Activated B cell treated with CpG ODN at 0.5 μM for 24 hours (primary cell): ENCODE measurements at regions of chr7 and their contacts with region 1.

Region 1: DNA sequence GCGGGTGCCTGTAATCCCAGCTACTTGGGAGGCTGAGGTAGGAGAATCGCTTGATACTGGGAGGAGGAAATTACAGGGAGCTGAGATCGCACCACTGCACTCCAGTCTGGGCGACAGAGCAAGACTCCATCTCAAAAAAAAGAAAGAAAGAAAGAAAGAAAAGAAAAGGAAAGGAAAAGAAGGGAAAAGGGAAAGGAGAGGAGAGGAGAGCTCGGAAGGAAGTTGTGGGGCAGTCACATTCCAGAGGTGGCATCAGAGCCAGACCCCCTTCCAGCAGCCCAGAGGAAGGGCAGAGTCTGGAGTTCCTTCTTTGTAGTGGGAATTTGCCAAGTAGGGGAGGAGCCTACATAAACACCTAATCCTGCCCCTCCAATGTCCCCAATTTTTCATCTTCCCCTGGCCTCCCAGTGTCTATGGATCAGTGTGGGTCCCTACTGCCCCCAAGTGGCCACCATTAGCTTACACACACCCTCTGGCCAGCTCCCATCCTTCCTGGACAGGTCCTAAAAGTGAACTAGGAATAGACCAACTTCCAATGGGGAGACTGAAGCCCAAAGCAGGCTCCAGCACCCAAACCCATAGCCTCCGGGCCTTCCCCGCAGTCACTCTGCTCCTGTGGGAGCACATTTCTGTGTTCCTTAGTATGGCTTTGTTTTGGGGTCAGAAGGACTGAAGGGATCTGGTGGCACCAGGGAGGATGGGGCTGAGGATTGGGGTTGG is 39.6 kb upstream of the HSPB1 start:
- DNase-seq: no peak
- ATAC-seq: no peak
- H3K4me3 Mint-ChIP-seq: no peak overlapping the region
- H3K27ac Mint-ChIP-seq: no peak overlapping the region
- H3K4me1 Mint-ChIP-seq: peaks cover 12% of the 10 kb centered on the region
- H3K27me3 Mint-ChIP-seq: peaks cover 37% of the 10 kb centered on the region
- CTCF ChIP-seq: no peak

Region 2: DNA sequence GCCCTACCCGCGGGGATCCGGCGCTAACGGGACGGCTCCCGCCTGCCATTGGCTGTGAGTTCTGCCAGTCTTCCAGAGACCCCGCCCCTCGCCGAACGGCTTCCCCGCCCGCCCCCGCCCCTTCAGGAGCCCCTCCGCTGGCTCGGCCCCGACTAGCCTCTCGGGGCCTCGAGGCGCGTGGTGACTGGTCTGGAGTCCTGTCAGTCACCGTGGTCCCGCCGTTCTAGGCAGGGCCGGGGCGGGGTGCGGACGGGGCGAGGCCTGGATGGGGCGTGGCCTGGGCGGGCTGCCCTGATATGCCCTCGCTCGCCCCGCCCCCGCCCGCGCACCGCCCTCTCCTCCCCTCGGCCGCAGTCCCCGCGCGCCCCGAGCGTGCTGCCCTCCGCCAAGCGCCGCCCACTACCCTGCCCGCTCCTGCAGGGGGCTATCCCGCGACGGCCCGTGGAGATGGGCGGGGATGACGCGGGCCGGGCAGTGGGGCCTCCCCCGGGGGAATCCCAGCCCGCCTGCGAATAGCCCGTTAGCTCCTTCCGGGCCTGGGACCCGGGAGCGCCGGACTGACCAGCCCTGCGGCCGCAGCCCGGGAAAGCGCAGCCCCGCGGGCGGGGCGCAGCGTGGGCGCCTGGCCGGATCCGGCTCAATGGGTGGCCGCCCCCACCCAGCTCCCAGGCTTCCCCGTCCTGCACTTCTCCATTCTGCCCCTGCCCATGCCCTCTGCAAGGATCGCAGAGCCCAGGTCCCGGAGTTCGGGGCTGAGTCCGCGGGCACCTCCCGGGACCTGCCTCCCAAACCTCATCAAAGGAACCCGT is 523.7 kb before region 1 on chr7:
- CTCF ChIA-PET with region 1: no interaction called
- POLR2A ChIA-PET with region 1: no interaction called
- intact Hi-C with region 1: no loop called
- DNase-seq: peak; percentile 97
- ATAC-seq: peak; percentile 91
- H3K4me3 Mint-ChIP-seq: peak overlapping the region; percentile 96
- H3K27ac Mint-ChIP-seq: peak overlapping the region; percentile 97
- H3K4me1 Mint-ChIP-seq: peaks cover 38% of the 10 kb centered on the region
- H3K27me3 Mint-ChIP-seq: no peaks in the 10 kb centered on the region
- CTCF ChIP-seq: no peak

Region 3: GRCh38 chr7:76069238-76069638 is 193.6 kb before region 1 on chr7:
- CTCF ChIA-PET with region 1: no interaction called
- POLR2A ChIA-PET with region 1: no interaction called
- intact Hi-C with region 1: no loop called
- DNase-seq: no peak
- ATAC-seq: no peak
- H3K4me3 Mint-ChIP-seq: no peak overlapping the region
- H3K27ac Mint-ChIP-seq: no peak overlapping the region
- H3K4me1 Mint-ChIP-seq: no peaks in the 10 kb centered on the region
- H3K27me3 Mint-ChIP-seq: no peaks in the 10 kb centered on the region
- CTCF ChIP-seq: no peak

Region 4: GRCh38 chr7:76179686-76180085 is 83.2 kb before region 1 on chr7:
- CTCF ChIA-PET with region 1: interaction called, 12 read pairs
- POLR2A ChIA-PET with region 1: no interaction called
- intact Hi-C with region 1: loop called (anchors 1 kb)
- DNase-seq: no peak
- ATAC-seq: no peak
- H3K4me3 Mint-ChIP-seq: no peak overlapping the region
- H3K27ac Mint-ChIP-seq: no peak overlapping the region
- H3K4me1 Mint-ChIP-seq: peaks cover 3% of the 10 kb centered on the region
- H3K27me3 Mint-ChIP-seq: peaks cover 6% of the 10 kb centered on the region
- CTCF ChIP-seq: no peak

Region 5: GRCh38 chr7:76206633-76207032 is 56.2 kb before region 1 on chr7:
- CTCF ChIA-PET with region 1: no interaction called
- POLR2A ChIA-PET with region 1: no interaction called
- intact Hi-C with region 1: no loop called
- DNase-seq: no peak
- ATAC-seq: no peak
- H3K4me3 Mint-ChIP-seq: no peak overlapping the region
- H3K27ac Mint-ChIP-seq: no peak overlapping the region
- H3K4me1 Mint-ChIP-seq: no peaks in the 10 kb centered on the region
- H3K27me3 Mint-ChIP-seq: peaks cover 33% of the 10 kb centered on the region
- CTCF ChIP-seq: no peak